Adrenal gland (tissue), 19 donors: ENCODE measurements at regions of chr2 and their contacts with region 1.

Region 1: GRCh38 chr2:26144953-26145680 is 27.8 kb upstream of the GAREM2 start:
- DNase-seq: peak; percentile 45 to 83 (median 59)
- H3K4me3 ChIP-seq: peak overlapping the region in 1 of 4 donors; percentile 18
- H3K27ac ChIP-seq: no peak overlapping the region
- H3K4me1 ChIP-seq: no peaks in the 10 kb centered on the region
- H3K27me3 ChIP-seq: no peaks in the 10 kb centered on the region
- CTCF ChIP-seq: peak; percentile 48 to 89 (median 82)
- POLR2A ChIP-seq: no peak

Region 2: DNA sequence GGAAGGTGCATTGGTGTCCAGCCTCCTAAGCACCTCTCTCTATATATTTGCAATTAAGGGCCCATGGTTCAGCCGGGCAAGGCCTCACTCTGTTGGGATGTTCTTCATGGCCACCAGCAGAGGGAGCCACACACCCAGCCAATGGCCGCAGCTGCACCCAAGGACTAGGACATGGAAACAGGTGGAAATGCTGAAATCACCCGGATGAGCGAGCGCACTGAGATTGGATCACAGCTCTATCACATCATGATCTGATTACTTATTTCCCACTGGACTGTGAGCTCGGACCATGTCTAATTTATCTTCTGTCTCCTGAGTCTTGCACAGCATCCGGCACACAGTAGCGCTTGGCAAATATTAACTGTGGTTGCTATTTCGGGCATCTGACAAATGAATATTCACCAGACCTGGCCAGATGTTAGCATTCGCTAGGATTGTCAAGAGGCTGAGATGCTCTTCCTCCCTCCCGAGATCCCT is 194.0 kb before region 1 on chr2:
- intact Hi-C with region 1: loop called in 1 of 2 experiments (anchors 5 kb)
- DNase-seq: peak; percentile 83 to 95 (median 89)
- H3K4me3 ChIP-seq: no peak overlapping the region
- H3K27ac ChIP-seq: peak overlapping the region in 2 of 5 donors; percentile 17 to 30
- H3K4me1 ChIP-seq: peaks cover 0 to 4% of the 10 kb centered on the region in 2 donors
- H3K27me3 ChIP-seq: no peaks in the 10 kb centered on the region
- CTCF ChIP-seq: peak; percentile 87 to 98 (median 94)
- POLR2A ChIP-seq: no peak

Region 3: GRCh38 chr2:25991965-25992364 is 153.2 kb before region 1 on chr2:
- intact Hi-C with region 1: loop called (anchors 5 kb)
- DNase-seq: no peak
- H3K4me3 ChIP-seq: no peak overlapping the region
- H3K27ac ChIP-seq: no peak overlapping the region
- H3K4me1 ChIP-seq: peaks cover 0 to 16% of the 10 kb centered on the region in 2 donors
- H3K27me3 ChIP-seq: no peaks in the 10 kb centered on the region
- CTCF ChIP-seq: no peak
- POLR2A ChIP-seq: peak in 1 of 2 donors; percentile 13

Region 4: DNA sequence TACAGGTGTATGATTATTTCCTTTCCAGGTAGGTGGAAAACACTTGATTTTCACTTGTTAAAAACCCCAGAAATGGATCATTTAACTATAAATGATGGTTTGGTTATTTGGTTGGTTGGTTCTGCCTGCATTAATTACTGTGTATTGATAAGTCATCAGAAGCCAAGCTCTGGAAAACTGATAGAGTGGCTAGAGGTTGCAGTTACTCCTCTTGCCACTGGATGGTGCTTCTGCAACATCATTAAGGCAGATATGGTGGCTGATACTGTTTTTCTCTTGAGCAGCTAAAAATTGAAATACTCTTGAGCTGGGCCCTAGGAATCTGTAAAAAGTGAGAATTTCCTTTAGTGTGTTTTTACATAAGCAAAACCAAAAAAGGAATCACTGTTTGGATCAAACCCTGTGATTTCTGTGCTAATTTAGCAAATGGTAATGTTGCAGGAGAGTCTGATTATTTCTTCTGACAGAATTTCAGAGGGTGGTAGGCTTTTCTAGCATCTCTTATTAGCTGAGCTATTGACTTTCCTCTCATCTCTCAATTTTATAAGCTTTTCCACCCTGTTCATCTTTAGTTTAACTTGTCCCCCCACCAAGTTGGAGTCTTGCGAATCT is 57.0 kb before region 1 on chr2:
- intact Hi-C with region 1: loop called in 1 of 2 experiments (anchors 5 kb)
- DNase-seq: peak in 1 of 7 donors; percentile 33
- H3K4me3 ChIP-seq: no peak overlapping the region
- H3K27ac ChIP-seq: no peak overlapping the region
- H3K4me1 ChIP-seq: peaks cover 0 to 7% of the 10 kb centered on the region in 2 donors
- H3K27me3 ChIP-seq: no peaks in the 10 kb centered on the region
- CTCF ChIP-seq: peak; percentile 50 to 77 (median 72)
- POLR2A ChIP-seq: no peak

Region 5: DNA sequence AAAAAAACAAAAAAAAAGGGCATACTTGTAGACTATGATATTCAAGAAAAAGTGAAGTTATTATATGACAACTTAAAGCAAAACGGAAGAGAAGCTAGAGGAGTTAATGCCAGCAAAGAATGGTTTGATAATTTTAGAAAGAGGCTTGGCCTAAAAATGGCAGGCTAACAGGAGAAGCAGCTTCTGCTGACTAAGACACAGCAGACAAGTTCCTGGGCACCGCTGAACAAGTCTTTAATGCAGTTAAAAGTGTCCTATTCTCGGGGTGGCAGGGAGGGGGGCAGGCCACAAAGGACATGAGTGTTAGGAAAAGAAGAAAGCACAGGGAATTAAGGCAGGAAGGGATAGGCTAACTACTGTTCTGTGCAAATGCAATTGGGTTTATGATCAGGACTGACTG is 22.5 kb before region 1 on chr2:
- intact Hi-C with region 1: no loop called
- DNase-seq: no peak
- H3K4me3 ChIP-seq: no peak overlapping the region
- H3K27ac ChIP-seq: no peak overlapping the region
- H3K4me1 ChIP-seq: peaks cover 0 to 3% of the 10 kb centered on the region in 2 donors
- H3K27me3 ChIP-seq: no peaks in the 10 kb centered on the region
- CTCF ChIP-seq: no peak
- POLR2A ChIP-seq: no peak